A673 (cell line): ENCODE measurements at regions of chr4 and their contacts with region 1.

Region 1: GRCh38 chr4:101347557-101348366 is 436 bp upstream of the PPP3CA start:
- DNase-seq: peak; percentile 98
- H3K4me3 ChIP-seq: peak overlapping the region; percentile 98
- H3K27ac ChIP-seq: peak overlapping the region; percentile 91
- H3K4me1 ChIP-seq: peaks cover 31% of the 10 kb centered on the region
- H3K27me3 ChIP-seq: no peaks in the 10 kb centered on the region
- CTCF ChIP-seq: 0 out of 2 replicates have a peak, but pooled peaks have one; percentile 14

Region 2: GRCh38 chr4:101187841-101188240 is 159.9 kb before region 1 on chr4:
- CTCF ChIA-PET with region 1: no interaction called
- POLR2A ChIA-PET with region 1: no interaction called
- intact Hi-C with region 1: loop called (anchors 5 kb)
- DNase-seq: no peak
- H3K4me3 ChIP-seq: no peak overlapping the region
- H3K27ac ChIP-seq: no peak overlapping the region
- H3K4me1 ChIP-seq: peaks cover 49% of the 10 kb centered on the region
- H3K27me3 ChIP-seq: no peaks in the 10 kb centered on the region
- CTCF ChIP-seq: peak; percentile 56

Region 3: GRCh38 chr4:101200561-101200960 is 147.2 kb before region 1 on chr4:
- CTCF ChIA-PET with region 1: no interaction called
- POLR2A ChIA-PET with region 1: no interaction called
- intact Hi-C with region 1: no loop called
- DNase-seq: peak; percentile 61
- H3K4me3 ChIP-seq: no peak overlapping the region
- H3K27ac ChIP-seq: peak overlapping the region; percentile 25
- H3K4me1 ChIP-seq: peaks cover 38% of the 10 kb centered on the region
- H3K27me3 ChIP-seq: no peaks in the 10 kb centered on the region
- CTCF ChIP-seq: no peak

Region 4: DNA sequence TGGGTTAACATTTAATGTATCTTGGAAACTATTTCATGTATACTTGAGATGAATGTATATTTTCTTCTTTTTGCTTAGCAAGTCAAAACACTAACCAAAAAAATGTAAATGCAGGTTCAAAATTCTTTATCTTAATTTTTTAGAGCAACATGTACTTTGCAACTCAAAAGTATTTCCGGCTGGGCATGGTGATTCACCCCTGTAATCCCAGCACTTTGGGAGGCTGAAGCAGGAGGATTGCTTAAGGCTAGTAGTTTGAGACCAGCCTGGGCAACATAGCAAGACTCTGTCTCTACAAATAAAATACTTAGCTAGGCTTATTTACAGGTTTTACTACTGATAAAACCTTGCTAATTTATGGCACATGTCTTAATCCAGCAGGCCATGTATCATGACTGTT is 78.1 kb after region 1 on chr4:
- CTCF ChIA-PET with region 1: no interaction called
- POLR2A ChIA-PET with region 1: no interaction called
- intact Hi-C with region 1: no loop called
- DNase-seq: no peak
- H3K4me3 ChIP-seq: no peak overlapping the region
- H3K27ac ChIP-seq: no peak overlapping the region
- H3K4me1 ChIP-seq: peaks cover 16% of the 10 kb centered on the region
- H3K27me3 ChIP-seq: no peaks in the 10 kb centered on the region
- CTCF ChIP-seq: no peak